H1 (cell line): ENCODE measurements at regions of chr7 and their contacts with region 1.

Region 1: GRCh38 chr7:135672560-135673359 is 10.4 kb downstream of the STMP1 start:
- DNase-seq: no peak
- H3K4me3 ChIP-seq: no peak overlapping the region
- H3K27ac ChIP-seq: no peak overlapping the region
- H3K4me1 ChIP-seq: no peaks in the 10 kb centered on the region
- H3K27me3 ChIP-seq: no peaks in the 10 kb centered on the region
- CTCF ChIP-seq: peak in 2 of 3 experiments; percentile 67 to 82; a peak in 3 of 4 replicates
- EP300 ChIP-seq: no peak
- POLR2A ChIP-seq: no peak
- RAD21 ChIP-seq: peak; percentile 71 to 75

Region 2: GRCh38 chr7:135662373-135663114 is 10.2 kb before region 1 on chr7 and contains the start of gene STMP1:
- CTCF ChIA-PET with region 1: interaction called, 55 read pairs
- POLR2A ChIA-PET with region 1: interaction called, 12 read pairs
- DNase-seq: peak; percentile 92 to 98
- H3K4me3 ChIP-seq: peak within 1 kb of the TSS; percentile 87 to 95 (median 93)
- H3K27ac ChIP-seq: peak within 1 kb of the TSS; percentile 81
- H3K4me1 ChIP-seq: no peaks in the 10 kb centered on the region; a peak in 2 of 7 replicates
- H3K27me3 ChIP-seq: no peaks in the 10 kb centered on the region
- CTCF ChIP-seq: peak; percentile 48 to 72 (median 67); a peak in 3 of 4 replicates
- EP300 ChIP-seq: no peak
- POLR2A ChIP-seq: peak; percentile 90 to 93
- RAD21 ChIP-seq: peak; percentile 42 to 46; a peak in 2 of 4 replicates
- total RNA-seq, gene STMP1: 36.7 and 36.9 TPM in 2 replicates

Region 3: DNA sequence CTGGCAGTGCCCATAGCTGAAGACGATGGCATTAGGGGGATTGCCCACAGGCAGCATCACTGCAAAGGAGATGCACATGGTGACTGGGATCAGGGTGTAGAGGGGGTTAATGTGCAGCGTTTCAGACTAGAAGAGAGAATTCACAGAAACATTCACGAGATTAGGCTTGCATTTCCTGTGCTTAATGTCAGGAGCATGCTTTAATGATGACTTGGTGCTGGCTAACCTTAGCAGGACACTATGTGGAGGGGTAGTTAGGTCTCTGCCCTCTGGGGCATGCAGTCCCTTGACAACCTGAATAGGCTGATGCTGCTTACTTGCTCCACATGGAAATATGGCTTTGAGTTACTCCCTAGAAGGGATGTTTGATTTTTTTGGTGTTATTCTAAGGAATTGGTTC is 11.4 kb after region 1 on chr7:
- CTCF ChIA-PET with region 1: interaction called, 89 read pairs
- POLR2A ChIA-PET with region 1: interaction called, 4 read pairs
- DNase-seq: no peak
- H3K4me3 ChIP-seq: no peak overlapping the region
- H3K27ac ChIP-seq: no peak overlapping the region
- H3K4me1 ChIP-seq: peaks cover 0 to 3% (median 0%) of the 10 kb centered on the region in 4 experiments; a peak in 2 of 7 replicates
- H3K27me3 ChIP-seq: no peaks in the 10 kb centered on the region
- CTCF ChIP-seq: no peak
- EP300 ChIP-seq: no peak
- POLR2A ChIP-seq: no peak
- RAD21 ChIP-seq: no peak

Region 4: GRCh38 chr7:135690566-135690965 is 17.8 kb after region 1 on chr7:
- CTCF ChIA-PET with region 1: interaction called, 22 read pairs
- POLR2A ChIA-PET with region 1: interaction called, 4 read pairs
- DNase-seq: no peak
- H3K4me3 ChIP-seq: no peak overlapping the region
- H3K27ac ChIP-seq: no peak overlapping the region
- H3K4me1 ChIP-seq: no peaks in the 10 kb centered on the region
- H3K27me3 ChIP-seq: no peaks in the 10 kb centered on the region
- CTCF ChIP-seq: no peak
- EP300 ChIP-seq: no peak
- POLR2A ChIP-seq: no peak
- RAD21 ChIP-seq: no peak

Region 5: DNA sequence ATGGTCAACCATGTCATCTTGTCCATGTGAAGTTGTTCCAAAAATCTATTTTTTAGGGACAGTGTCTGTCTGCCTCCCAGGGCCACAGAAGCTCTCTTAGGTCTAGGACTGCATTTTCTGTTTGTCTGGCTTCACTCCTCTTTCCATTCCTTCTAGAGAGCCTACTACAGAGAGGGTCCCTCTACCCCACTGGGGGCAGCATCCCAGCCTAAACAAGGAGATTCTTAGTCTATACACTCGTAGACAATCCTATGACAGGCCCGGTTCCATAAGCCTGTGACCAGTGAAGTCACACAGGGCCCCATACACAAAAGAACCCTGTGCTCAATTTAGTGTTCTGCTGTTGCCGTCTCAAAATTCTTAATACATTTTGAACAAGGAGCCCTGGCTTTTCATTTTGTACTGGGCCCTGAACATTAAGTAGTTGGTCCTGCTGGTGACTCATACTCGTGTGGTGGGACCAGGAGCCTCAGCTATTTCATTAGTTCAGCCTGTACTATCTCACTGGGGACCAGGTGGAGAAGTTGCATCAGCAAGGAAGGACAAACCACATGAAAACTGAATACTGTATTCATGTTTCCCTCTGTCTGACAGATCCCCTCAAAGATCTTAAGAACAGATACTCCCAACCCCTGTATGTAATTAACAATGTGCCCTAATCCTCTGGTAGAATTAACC is 99.3 kb after region 1 on chr7:
- CTCF ChIA-PET with region 1: interaction called, 26 read pairs
- POLR2A ChIA-PET with region 1: no interaction called
- DNase-seq: no peak
- H3K4me3 ChIP-seq: no peak overlapping the region
- H3K27ac ChIP-seq: no peak overlapping the region
- H3K4me1 ChIP-seq: peaks cover 0 to 10% (median 0%) of the 10 kb centered on the region in 4 experiments; a peak in 2 of 7 replicates
- H3K27me3 ChIP-seq: no peaks in the 10 kb centered on the region
- CTCF ChIP-seq: no peak
- EP300 ChIP-seq: no peak
- POLR2A ChIP-seq: no peak
- RAD21 ChIP-seq: no peak